CD4-positive, alpha-beta memory T cell (primary cell): ENCODE measurements at regions of chr9 and their contacts with region 1.

Region 1: GRCh38 chr9:113657703-113658544 is 194.4 kb downstream of the RGS3 start:
- DNase-seq: peak; percentile 67 to 76 (median 68)
- H3K4me3 ChIP-seq: no peak overlapping the region
- H3K4me3 Mint-ChIP-seq: no peak overlapping the region
- H3K27ac ChIP-seq: no peak overlapping the region
- H3K27ac Mint-ChIP-seq: peak overlapping the region in 2 of 7 donors; percentile 65 to 67
- H3K4me1 ChIP-seq: no peaks in the 10 kb centered on the region
- H3K4me1 Mint-ChIP-seq: peaks cover 0 to 6% (median 2%) of the 10 kb centered on the region in 4 donors
- H3K27me3 ChIP-seq: no peaks in the 10 kb centered on the region
- H3K27me3 Mint-ChIP-seq: peaks cover 10 to 16% of the 10 kb centered on the region in 2 donors

Region 2: DNA sequence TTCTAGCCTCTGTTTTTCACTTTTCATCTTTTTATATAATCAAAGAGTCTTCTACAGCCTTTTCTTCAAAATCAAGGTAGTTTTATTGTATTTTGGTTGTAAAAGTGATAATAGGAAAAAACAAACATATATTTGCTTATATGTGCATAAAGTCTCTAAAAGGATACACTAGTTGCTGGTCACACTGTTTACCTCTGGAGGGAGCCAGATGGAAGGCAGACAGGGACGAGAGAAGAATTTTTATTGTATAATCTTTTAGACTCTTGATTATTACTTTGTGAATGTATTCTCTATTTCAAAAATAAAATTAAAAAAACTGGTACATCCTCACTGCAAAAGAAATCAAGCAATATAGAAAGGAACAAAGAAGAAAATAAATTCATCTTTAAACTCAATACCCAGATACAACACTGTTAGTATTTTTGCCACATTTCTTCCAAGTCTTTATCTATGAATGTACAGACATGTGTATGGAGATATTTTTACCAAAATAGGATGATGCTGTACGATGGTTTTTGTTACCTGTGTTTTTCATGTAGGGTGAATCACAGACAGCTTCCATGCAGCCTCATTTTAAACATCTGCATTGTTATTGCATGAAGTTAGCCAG is 348.6 kb before region 1 on chr9:
- CTCF ChIA-PET with region 1: interaction called, 13 read pairs
- POLR2A ChIA-PET with region 1: interaction called, 4 read pairs
- intact Hi-C with region 1: loop called (anchors 1 kb)
- DNase-seq: peak in 4 of 5 donors; percentile 18 to 34 (median 26)
- H3K4me3 ChIP-seq: no peak overlapping the region
- H3K4me3 Mint-ChIP-seq: no peak overlapping the region
- H3K27ac ChIP-seq: no peak overlapping the region
- H3K27ac Mint-ChIP-seq: peak overlapping the region in 1 of 7 donors; percentile 48
- H3K4me1 ChIP-seq: no peaks in the 10 kb centered on the region
- H3K4me1 Mint-ChIP-seq: no peaks in the 10 kb centered on the region
- H3K27me3 ChIP-seq: no peaks in the 10 kb centered on the region
- H3K27me3 Mint-ChIP-seq: peaks cover 3% of the 10 kb centered on the region in 2 donors

Region 3: GRCh38 chr9:113410207-113410864 is 247.6 kb before region 1 on chr9 and contains the starts of genes C9orf43 and POLE3:
- CTCF ChIA-PET with region 1: interaction called, 72 read pairs
- POLR2A ChIA-PET with region 1: no interaction called
- intact Hi-C with region 1: no loop called
- DNase-seq: peak; percentile 94 to 97 (median 95)
- H3K4me3 ChIP-seq: peak within 1 kb of the TSS; percentile 65 to 88
- H3K4me3 Mint-ChIP-seq: peak within 1 kb of the TSS; percentile 95 to 100 (median 98)
- H3K27ac ChIP-seq: peak within 1 kb of the TSS; percentile 84
- H3K27ac Mint-ChIP-seq: peak within 1 kb of the TSS; percentile 99 to 100 (median 99)
- H3K4me1 ChIP-seq: peaks cover 27% of the 10 kb centered on the region
- H3K4me1 Mint-ChIP-seq: peaks cover 17 to 44% (median 33%) of the 10 kb centered on the region in 4 donors
- H3K27me3 ChIP-seq: no peaks in the 10 kb centered on the region
- H3K27me3 Mint-ChIP-seq: peaks cover 2 to 3% of the 10 kb centered on the region in 2 donors
- total RNA-seq, gene C9orf43: 0.86 to 0.87 TPM
- total RNA-seq, gene POLE3: 46.9 TPM

Region 4: DNA sequence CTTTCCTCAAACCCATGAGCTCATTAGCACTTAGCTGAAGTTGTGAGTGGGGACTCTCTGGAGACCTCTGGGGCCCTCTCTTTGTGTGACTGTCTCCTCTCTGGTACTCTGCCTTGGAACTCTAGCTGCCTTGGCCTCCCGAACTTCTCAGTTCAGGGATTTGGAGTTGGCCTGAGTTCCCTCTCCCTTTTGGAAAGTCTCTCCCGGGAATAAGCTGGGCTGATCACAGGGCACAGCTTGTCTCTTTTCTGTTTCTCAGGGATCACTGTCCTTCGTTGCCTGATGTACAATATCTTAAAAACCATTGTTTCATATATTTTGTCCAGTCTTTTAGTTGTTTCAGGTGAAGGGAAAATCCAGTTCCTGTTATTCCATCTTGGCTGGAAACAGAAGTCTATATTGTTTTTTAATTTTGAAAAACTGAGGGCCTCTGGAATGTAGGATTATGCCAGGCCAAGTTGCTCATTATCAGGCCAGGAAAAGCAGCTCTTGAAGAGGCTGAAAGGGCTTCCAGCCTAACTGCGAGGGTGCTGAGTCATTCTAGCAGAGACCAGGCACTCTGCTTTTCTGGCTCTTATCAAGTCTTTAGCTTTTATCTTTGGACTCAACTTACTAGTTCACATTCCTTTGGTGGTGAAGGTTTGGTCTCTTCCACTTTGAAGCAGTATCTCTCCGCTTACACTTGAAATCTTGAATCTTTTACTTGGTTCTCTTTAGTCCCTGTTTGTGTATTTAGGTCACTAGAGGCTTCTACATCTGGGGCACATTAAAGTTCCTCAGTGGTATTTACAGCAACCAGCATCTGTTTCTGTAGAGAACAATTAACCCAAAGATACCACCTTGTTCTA is 202.8 kb before region 1 on chr9:
- CTCF ChIA-PET with region 1: interaction called, 246 read pairs
- POLR2A ChIA-PET with region 1: no interaction called
- intact Hi-C with region 1: no loop called
- DNase-seq: no peak
- H3K4me3 ChIP-seq: no peak overlapping the region
- H3K4me3 Mint-ChIP-seq: no peak overlapping the region
- H3K27ac ChIP-seq: no peak overlapping the region
- H3K27ac Mint-ChIP-seq: peak overlapping the region in 4 of 7 donors; percentile 19 to 61 (median 45)
- H3K4me1 ChIP-seq: no peaks in the 10 kb centered on the region
- H3K4me1 Mint-ChIP-seq: peaks cover 0 to 6% (median 0%) of the 10 kb centered on the region in 4 donors
- H3K27me3 ChIP-seq: no peaks in the 10 kb centered on the region
- H3K27me3 Mint-ChIP-seq: no peaks in the 10 kb centered on the region

Region 5: DNA sequence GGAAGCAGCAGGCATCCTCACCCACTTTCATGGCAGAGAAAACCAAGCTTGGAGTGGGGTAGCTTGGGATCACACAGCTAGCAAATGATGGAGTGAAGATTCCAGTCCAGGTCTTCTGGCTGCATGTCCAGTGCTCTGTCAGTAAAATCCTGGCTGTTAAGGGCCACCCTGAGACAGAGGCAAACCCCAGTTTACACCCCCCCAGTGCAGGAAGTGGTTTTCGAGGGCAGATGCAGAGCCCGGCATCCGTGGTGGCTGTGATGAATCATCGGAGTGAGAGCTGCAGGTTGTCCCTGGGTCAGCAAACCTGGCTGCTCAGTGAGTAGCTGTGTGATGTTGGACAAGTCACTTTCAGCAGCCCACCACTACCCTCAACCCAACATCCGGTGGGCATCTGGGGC is 79.0 kb before region 1 on chr9:
- CTCF ChIA-PET with region 1: interaction called, 160 read pairs
- POLR2A ChIA-PET with region 1: interaction called, 4 read pairs
- intact Hi-C with region 1: loop called (anchors 1 kb)
- DNase-seq: peak; percentile 72 to 92 (median 81)
- H3K4me3 ChIP-seq: peak overlapping the region in 1 of 2 donors; percentile 47
- H3K4me3 Mint-ChIP-seq: peak overlapping the region; percentile 71 to 92 (median 82)
- H3K27ac ChIP-seq: peak overlapping the region; percentile 69
- H3K27ac Mint-ChIP-seq: peak overlapping the region; percentile 88 to 97 (median 96)
- H3K4me1 ChIP-seq: peaks cover 65% of the 10 kb centered on the region
- H3K4me1 Mint-ChIP-seq: peaks cover 57 to 88% (median 75%) of the 10 kb centered on the region in 4 donors
- H3K27me3 ChIP-seq: no peaks in the 10 kb centered on the region
- H3K27me3 Mint-ChIP-seq: no peaks in the 10 kb centered on the region

Region 6: DNA sequence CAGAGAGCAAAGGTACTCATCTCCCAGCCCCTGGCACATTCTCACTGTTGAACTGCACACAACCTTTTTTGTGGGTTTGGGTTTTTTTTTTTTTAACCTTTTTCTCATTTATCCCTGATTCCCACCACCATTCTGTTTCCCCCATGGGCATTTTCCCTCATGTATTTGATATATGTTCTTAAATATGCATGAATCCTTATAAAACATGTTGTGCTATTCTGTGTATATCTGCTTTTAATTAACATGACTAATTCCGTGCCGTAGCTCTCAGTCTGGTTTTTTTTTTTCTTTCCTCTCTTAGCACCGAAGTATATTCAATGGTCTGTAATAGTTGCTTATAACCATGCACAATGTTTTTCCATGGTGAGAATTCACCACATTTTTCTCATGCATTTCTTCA is 10.1 kb after region 1 on chr9:
- CTCF ChIA-PET with region 1: interaction called, 26 read pairs
- POLR2A ChIA-PET with region 1: no interaction called
- intact Hi-C with region 1: no loop called
- DNase-seq: no peak
- H3K4me3 ChIP-seq: no peak overlapping the region
- H3K4me3 Mint-ChIP-seq: no peak overlapping the region
- H3K27ac ChIP-seq: no peak overlapping the region
- H3K27ac Mint-ChIP-seq: no peak overlapping the region
- H3K4me1 ChIP-seq: no peaks in the 10 kb centered on the region
- H3K4me1 Mint-ChIP-seq: no peaks in the 10 kb centered on the region
- H3K27me3 ChIP-seq: no peaks in the 10 kb centered on the region
- H3K27me3 Mint-ChIP-seq: peaks cover 2 to 5% of the 10 kb centered on the region in 2 donors